ENCODE measurements at regions of chr3 and their contacts with region 1.

Region 1: GRCh38 chr3:187738331-187739093 is 6.8 kb downstream of the BCL6 start:
- DNase-seq: peak; percentile 33
- ATAC-seq: peak; percentile 41
- H3K4me3 Mint-ChIP-seq: peak overlapping the region; percentile 98
- H3K27ac Mint-ChIP-seq: peak overlapping the region; percentile 81
- H3K4me1 Mint-ChIP-seq: peaks cover 61% of the 10 kb centered on the region
- H3K27me3 Mint-ChIP-seq: no peaks in the 10 kb centered on the region
- CTCF ChIP-seq: no peak

Region 2: DNA sequence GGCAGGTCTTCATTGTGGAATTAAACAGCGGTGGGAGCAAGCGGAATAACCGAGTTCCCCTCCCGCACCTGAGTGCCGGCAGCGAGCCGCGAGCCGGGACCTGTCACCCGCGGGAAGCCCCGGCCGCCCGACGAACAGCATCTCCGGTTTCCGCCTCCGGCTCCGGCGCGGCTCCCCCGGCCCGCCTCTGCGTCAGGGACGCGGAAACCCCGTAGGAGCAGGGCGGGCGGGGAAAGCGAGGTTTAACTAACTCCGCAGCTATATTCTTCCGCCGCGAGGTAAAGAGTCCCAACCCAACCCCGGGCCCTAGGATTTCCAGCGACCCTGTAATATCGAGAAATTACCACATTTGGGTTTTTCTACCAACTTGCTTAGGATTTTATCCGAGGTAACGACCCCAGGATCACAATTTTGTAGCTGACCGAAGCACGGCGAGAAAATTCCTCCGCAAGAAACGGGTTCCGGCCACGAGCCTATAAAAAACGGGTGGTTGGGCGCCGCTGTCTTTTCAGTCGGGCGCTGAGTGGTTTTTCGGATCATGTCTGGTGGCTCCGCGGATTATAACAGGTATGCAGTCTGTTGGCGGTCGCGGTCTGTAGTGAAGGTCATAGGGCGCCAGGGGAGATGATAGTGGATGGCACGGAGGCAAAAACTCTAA is 955.3 kb before region 1 on chr3 and contains the start of gene EIF4A2:
- CTCF ChIA-PET with region 1: no interaction called
- POLR2A ChIA-PET with region 1: interaction called, 15 read pairs
- intact Hi-C with region 1: no loop called
- DNase-seq: peak; percentile 88
- ATAC-seq: peak; percentile 77
- H3K4me3 Mint-ChIP-seq: peak within 1 kb of the TSS; percentile 98
- H3K27ac Mint-ChIP-seq: peak within 1 kb of the TSS; percentile 99
- H3K4me1 Mint-ChIP-seq: peaks cover 48% of the 10 kb centered on the region
- H3K27me3 Mint-ChIP-seq: no peaks in the 10 kb centered on the region
- CTCF ChIP-seq: no peak
- total RNA-seq, gene EIF4A2: 533 and 574 TPM in 2 replicates

Region 3: GRCh38 chr3:188389711-188390342 is 651.3 kb after region 1 on chr3:
- CTCF ChIA-PET with region 1: interaction called, 11 read pairs
- POLR2A ChIA-PET with region 1: interaction called, 14 read pairs
- intact Hi-C with region 1: loop called (anchors 1 kb)
- DNase-seq: peak; percentile 29
- ATAC-seq: peak; percentile 84
- H3K4me3 Mint-ChIP-seq: peak overlapping the region; percentile 65
- H3K27ac Mint-ChIP-seq: peak overlapping the region; percentile 98
- H3K4me1 Mint-ChIP-seq: peaks cover 87% of the 10 kb centered on the region
- H3K27me3 Mint-ChIP-seq: no peaks in the 10 kb centered on the region
- CTCF ChIP-seq: no peak

Region 4: GRCh38 chr3:188489639-188490405 is 751.3 kb after region 1 on chr3:
- CTCF ChIA-PET with region 1: interaction called, 3 read pairs
- POLR2A ChIA-PET with region 1: no interaction called
- intact Hi-C with region 1: loop called (anchors 5 kb)
- DNase-seq: no peak
- ATAC-seq: peak; percentile 88
- H3K4me3 Mint-ChIP-seq: peak overlapping the region; percentile 57
- H3K27ac Mint-ChIP-seq: peak overlapping the region; percentile 84
- H3K4me1 Mint-ChIP-seq: peaks cover 48% of the 10 kb centered on the region
- H3K27me3 Mint-ChIP-seq: no peaks in the 10 kb centered on the region
- CTCF ChIP-seq: no peak

Region 5: DNA sequence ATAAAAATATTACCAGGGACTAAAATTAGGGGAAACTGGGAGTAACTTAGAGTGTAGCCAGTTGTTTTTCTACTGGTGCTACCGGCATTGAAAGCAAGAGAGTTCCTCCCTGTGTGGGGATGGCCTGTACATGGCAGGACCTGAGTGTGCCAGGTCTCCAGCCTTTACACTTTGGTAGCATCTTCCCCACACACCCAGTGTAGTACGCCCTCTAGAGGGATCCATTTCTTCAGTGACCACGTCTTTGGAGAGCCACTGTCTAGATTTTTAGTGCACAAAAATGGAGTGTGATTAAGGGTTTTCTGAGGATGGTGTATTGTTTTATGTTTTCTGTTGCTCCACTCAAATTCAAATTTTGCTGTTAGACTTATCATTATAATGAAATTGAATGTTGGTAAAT is 926.3 kb after region 1 on chr3:
- CTCF ChIA-PET with region 1: interaction called, 4 read pairs
- POLR2A ChIA-PET with region 1: no interaction called
- intact Hi-C with region 1: loop called (anchors 2 kb)
- DNase-seq: no peak
- ATAC-seq: no peak
- H3K4me3 Mint-ChIP-seq: no peak overlapping the region
- H3K27ac Mint-ChIP-seq: no peak overlapping the region
- H3K4me1 Mint-ChIP-seq: no peaks in the 10 kb centered on the region
- H3K27me3 Mint-ChIP-seq: no peaks in the 10 kb centered on the region
- CTCF ChIP-seq: no peak

Region 6: GRCh38 chr3:188863999-188864406 is 1125.5 kb after region 1 on chr3:
- CTCF ChIA-PET with region 1: no interaction called
- POLR2A ChIA-PET with region 1: interaction called, 11 read pairs
- intact Hi-C with region 1: no loop called
- DNase-seq: no peak
- ATAC-seq: no peak
- H3K4me3 Mint-ChIP-seq: no peak overlapping the region
- H3K27ac Mint-ChIP-seq: no peak overlapping the region
- H3K4me1 Mint-ChIP-seq: peaks cover 5% of the 10 kb centered on the region
- H3K27me3 Mint-ChIP-seq: no peaks in the 10 kb centered on the region
- CTCF ChIP-seq: no peak

Region 7: DNA sequence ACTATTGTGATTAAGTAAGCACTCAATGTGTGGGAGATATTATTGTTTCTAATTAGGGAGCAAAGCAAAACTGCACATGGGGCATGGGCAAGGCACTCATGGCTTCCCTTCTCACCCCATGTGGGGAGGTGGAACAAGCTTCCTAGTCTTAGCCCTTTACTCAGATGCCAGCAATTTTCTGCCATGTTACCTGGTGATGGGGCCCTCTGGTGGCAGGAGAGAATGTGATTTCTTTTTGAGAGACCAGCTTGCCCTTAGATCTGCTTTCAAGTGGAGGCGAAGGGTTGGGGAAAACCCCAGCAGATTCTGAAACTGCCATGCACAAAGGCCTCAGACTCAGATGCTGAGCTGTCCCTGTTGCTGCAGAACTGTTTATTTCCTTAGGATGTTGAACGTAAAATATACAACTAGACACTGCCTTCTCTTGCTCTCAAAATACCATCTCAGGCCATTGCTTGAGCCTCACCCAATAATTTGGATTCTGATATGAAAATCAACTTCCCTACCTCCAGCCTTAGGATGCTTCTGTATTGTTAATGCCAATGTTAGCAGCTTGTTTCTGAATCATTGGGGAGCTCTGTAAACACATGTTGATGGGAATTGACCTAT is 1303.1 kb after region 1 on chr3:
- CTCF ChIA-PET with region 1: interaction called, 79 read pairs
- POLR2A ChIA-PET with region 1: interaction called, 6 read pairs
- intact Hi-C with region 1: loop called (anchors 1 kb)
- DNase-seq: peak; percentile 37
- ATAC-seq: peak; percentile 97
- H3K4me3 Mint-ChIP-seq: no peak overlapping the region
- H3K27ac Mint-ChIP-seq: no peak overlapping the region
- H3K4me1 Mint-ChIP-seq: peaks cover 5% of the 10 kb centered on the region
- H3K27me3 Mint-ChIP-seq: no peaks in the 10 kb centered on the region
- CTCF ChIP-seq: peak; percentile 29